Posterior vena cava (tissue), 2 donors: ENCODE measurements at regions of chr3 and their contacts with region 1.

Region 1: DNA sequence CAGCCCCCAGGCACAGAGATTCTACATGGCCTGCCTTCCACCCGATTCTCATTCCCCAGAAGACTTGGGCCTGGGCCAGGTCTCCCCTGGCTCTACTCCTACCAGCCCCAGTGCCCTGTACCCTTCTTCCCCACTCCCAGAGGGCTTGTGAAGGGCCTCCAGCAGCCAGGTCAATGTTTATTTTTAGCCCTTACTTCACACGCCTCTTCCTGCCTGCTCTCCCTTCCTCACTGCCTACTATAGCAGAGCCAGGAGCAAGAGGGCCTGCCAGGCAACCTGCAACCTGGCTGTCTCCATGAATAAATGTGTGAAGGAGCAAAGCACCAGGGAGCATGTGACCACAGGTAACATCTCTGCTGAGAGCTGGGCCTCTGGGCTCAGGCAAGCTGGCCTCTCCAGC is 26.4 kb upstream of the APEH start:
- DNase-seq: no peak

Region 2: DNA sequence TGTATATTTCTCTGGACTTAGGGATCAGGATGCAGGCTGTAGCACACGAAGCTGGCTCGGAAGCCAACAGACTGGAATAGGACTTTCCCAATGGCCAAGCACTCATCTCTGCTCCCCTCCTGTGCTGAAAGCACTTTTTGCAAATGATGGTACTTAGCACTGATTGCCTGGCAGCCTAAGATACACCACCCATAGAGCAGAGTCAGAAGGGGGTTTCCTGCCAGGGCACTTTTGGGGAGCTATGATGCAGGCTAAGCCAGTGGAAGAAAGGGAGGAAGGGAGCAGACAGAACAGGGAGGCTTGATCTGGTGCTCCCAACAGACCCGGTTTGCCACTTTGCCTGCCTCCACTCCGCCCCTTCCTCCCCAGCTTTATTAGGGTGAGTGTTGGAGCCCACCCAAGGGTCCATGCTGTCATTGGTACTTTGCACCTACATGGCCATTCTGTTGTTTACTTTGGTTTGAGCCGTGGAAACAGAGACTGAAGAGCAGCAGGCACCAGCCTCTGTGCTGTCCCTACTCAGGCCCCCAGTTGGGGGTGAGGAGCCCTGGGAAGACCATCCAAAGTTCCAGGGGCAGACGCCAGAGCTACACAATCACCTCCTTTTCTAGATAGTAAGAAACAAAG is 77.6 kb before region 1 on chr3:
- intact Hi-C with region 1: loop called in 1 of 2 experiments (anchors 10 kb)
- DNase-seq: no peak